ENCODE measurements at regions of chr13 and their contacts with region 1.

Region 1: GRCh38 chr13:102212729-102213128 is 189.1 kb downstream of the FGF14 start:
- DNase-seq: no peak
- ATAC-seq: no peak

Region 2: DNA sequence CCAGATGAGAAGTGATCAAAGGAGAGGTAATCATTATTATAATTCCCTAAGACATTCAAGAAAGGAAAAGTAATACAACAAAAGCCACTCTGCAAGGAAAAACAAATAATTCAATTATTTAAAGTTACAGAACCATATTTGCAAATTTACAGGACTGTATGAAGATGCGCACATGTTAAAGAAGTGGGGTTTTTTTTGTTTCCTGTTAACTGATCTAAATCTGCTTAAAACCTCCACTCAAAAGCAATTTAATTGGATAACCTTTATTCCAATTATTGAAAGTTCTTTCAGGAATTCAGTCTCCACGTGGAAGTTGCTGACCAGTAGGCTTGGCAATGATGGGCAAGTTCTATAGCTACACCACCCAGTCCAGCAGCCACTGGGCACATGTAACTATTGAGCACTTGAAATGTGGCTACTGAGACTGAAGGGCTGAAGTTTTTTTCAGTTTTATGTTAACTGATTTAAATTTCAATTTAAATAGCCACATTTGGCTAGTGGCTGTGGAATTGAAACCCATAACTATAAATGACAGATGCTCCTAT is 43.2 kb before region 1 on chr13:
- intact Hi-C with region 1: loop called in 1 of 2 experiments (anchors 5 kb)
- DNase-seq: no peak
- ATAC-seq: no peak

Region 3: DNA sequence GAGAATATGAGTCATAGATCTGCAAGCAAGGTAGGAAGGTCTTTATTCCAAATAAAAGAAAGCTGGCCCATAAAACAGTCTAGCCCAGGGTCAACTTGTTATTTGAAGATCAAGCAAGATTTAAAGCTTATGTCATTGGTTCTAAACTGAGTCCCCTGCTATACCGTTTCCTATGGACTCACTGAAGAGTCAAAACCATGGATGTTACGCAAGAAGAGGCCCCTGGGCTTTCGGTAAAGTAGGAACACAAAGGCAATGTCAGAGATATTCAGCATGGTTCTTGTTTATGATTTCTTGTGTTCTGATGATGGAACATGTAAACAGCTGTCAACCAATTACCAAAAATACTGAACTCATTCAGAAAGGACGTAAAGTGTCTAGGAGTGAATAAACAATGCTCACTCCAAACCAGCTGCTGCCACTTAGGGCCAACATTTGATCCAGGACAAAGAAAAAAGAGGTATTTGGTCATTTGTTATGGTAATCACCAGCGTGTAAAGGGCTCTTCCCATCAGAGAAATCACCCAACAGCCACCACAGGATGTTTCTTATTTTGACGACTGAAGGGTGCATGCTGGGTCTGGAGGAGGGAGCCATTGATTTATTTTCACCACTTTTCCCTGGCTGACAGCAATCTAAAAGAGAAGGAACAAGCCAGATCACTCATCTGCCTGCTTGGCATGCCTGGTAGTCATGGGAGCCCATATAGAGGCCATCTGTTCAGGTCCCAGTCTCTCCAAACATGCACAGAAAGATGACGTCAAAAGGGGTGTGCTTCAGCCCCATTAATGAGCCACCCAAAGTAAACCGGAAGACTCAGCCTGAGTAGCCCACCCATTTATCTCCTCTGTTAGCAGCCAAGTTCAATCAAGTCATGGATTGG is 120.8 kb after region 1 on chr13:
- intact Hi-C with region 1: no loop called
- DNase-seq: no peak
- ATAC-seq: no peak